Activated CD4-positive, alpha-beta T cell treated with anti-CD3 and anti-CD28 coated beads, Interleukin-2, amount 10 ng/mL, durations not matched to agents 7 days and 5 days (primary cell): ENCODE measurements at regions of chr15 and their contacts with region 1.

Region 1: GRCh38 chr15:78241007-78241406 is 6.6 kb upstream of the ACSBG1 start:
- DNase-seq: peak; percentile 85
- H3K4me3 Mint-ChIP-seq: no peak overlapping the region
- H3K27ac Mint-ChIP-seq: no peak overlapping the region
- H3K4me1 Mint-ChIP-seq: peaks cover 2% of the 10 kb centered on the region
- H3K27me3 Mint-ChIP-seq: peaks cover 6% of the 10 kb centered on the region

Region 2: GRCh38 chr15:77959432-77959879 is 281.6 kb before region 1 on chr15:
- CTCF ChIA-PET with region 1: interaction called, 16 read pairs
- POLR2A ChIA-PET with region 1: no interaction called
- DNase-seq: peak; percentile 75
- H3K4me3 Mint-ChIP-seq: peak overlapping the region; percentile 41
- H3K27ac Mint-ChIP-seq: no peak overlapping the region
- H3K4me1 Mint-ChIP-seq: peaks cover 18% of the 10 kb centered on the region
- H3K27me3 Mint-ChIP-seq: peaks cover 25% of the 10 kb centered on the region

Region 3: GRCh38 chr15:78195735-78196201 is 45.2 kb before region 1 on chr15:
- CTCF ChIA-PET with region 1: interaction called, 13 read pairs
- POLR2A ChIA-PET with region 1: no interaction called
- DNase-seq: peak; percentile 50
- H3K4me3 Mint-ChIP-seq: no peak overlapping the region
- H3K27ac Mint-ChIP-seq: no peak overlapping the region
- H3K4me1 Mint-ChIP-seq: no peaks in the 10 kb centered on the region
- H3K27me3 Mint-ChIP-seq: peaks cover 6% of the 10 kb centered on the region

Region 4: GRCh38 chr15:78264304-78265136 is 23.5 kb after region 1 on chr15 and contains the start of gene DNAJA4:
- CTCF ChIA-PET with region 1: interaction called, 11 read pairs
- POLR2A ChIA-PET with region 1: no interaction called
- DNase-seq: peak; percentile 71
- H3K4me3 Mint-ChIP-seq: peak within 1 kb of the TSS; percentile 78
- H3K27ac Mint-ChIP-seq: peak within 1 kb of the TSS; percentile 89
- H3K4me1 Mint-ChIP-seq: peaks cover 28% of the 10 kb centered on the region
- H3K27me3 Mint-ChIP-seq: no peaks in the 10 kb centered on the region
- total RNA-seq, gene DNAJA4: 28.5 to 31.2 TPM